PC-9 (cell line): ENCODE measurements at regions of chr1 and their contacts with region 1.

Region 1: DNA sequence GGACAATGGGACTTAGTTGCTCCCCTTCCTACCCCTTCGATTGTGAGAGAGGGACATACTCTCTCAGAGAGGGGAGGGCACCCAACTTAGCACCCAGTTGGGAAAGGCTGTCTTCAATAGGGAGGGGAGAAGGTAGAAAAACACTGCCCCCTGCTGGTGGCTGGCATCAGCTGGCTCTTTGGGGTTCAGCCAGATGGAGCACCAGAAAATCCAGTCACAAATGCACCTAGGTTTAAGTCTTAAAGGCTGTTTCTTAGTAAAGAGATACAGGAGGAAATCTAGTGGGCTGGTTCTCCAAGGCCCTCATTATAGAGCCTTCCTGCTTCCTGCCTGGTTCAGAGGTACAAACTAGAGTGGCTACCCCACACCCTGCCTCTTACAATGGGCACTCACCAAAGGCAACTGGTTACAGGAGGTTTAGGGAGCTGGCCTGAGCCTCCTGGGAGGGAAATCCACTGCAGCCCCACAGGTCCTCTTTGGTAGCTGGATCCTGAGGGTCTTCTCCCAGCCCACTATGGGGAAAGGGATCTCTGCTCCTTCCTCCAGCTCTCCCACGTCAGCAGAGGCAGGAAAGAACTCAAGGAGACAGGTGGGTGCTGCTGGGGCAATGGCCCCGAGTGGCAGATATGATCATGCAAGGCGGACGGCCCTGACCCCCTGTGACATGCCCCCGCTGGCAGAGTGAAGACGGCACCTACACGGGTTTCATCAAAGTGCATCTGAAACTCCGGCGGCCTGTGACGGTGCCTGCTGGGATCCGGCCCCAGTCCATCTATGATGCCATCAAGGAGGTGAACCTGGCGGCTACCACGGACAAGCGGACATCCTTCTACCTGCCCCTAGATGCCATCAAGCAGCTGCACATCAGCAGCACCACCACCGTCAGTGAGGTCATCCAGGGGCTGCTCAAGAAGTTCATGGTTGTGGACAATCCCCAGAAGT is 28.3 kb downstream of the EIF2D start:
- DNase-seq: peak; percentile 42 to 64
- H3K4me3 ChIP-seq: no peak overlapping the region
- H3K27ac ChIP-seq: no peak overlapping the region
- H3K4me1 ChIP-seq: peaks cover 28% of the 10 kb centered on the region
- H3K27me3 ChIP-seq: no peaks in the 10 kb centered on the region
- CTCF ChIP-seq: peak; percentile 95

Region 2: GRCh38 chr1:206476058-206476457 is 107.9 kb before region 1 on chr1:
- CTCF ChIA-PET with region 1: no interaction called
- POLR2A ChIA-PET with region 1: no interaction called
- intact Hi-C with region 1: no loop called
- DNase-seq: no peak
- H3K4me3 ChIP-seq: no peak overlapping the region
- H3K27ac ChIP-seq: no peak overlapping the region
- H3K4me1 ChIP-seq: peaks cover 19% of the 10 kb centered on the region
- H3K27me3 ChIP-seq: no peaks in the 10 kb centered on the region
- CTCF ChIP-seq: no peak

Region 3: DNA sequence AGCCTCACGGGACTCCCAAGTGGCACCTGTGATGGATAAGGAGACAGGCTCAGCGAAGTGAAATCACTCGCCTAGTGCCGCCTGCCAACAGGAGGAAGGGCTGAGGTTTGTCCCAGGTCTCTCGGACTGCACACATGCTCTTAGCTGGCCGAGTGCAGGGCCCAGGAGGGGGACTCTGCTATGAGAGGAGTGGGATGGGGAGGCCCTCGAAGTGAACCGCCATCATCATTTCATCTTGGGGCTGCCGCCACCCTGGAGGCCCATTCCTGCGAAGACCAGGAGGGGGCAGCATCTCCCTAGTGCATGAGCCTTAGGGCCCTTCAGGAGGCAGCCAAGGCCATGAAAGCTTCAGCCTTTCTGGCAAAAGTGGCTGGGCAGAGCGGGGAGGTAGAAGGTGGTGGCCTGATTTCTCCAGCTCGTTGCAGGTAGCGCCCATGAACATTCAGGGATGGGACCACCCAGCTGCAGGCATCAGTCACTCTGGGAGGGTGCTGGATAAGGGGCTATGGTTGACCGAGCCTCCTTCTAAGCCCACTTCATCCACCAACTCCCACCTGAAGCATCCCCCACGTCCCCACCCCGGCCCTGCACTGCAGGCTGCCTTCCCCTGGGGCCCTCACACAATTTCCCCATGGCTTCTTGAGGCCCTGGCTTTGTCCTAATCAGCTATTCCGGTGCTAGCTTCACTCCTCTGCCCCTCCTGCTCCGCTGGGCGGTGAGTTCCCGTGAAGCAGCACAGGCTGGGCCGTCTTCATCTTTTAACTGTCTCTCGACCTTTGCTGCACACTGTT is 93.8 kb before region 1 on chr1:
- CTCF ChIA-PET with region 1: no interaction called
- POLR2A ChIA-PET with region 1: interaction called, 7 read pairs
- intact Hi-C with region 1: loop called (anchors 1 kb)
- DNase-seq: peak; percentile 51 to 71
- H3K4me3 ChIP-seq: no peak overlapping the region
- H3K27ac ChIP-seq: no peak overlapping the region
- H3K4me1 ChIP-seq: no peaks in the 10 kb centered on the region
- H3K27me3 ChIP-seq: no peaks in the 10 kb centered on the region
- CTCF ChIP-seq: peak; percentile 91

Region 4: DNA sequence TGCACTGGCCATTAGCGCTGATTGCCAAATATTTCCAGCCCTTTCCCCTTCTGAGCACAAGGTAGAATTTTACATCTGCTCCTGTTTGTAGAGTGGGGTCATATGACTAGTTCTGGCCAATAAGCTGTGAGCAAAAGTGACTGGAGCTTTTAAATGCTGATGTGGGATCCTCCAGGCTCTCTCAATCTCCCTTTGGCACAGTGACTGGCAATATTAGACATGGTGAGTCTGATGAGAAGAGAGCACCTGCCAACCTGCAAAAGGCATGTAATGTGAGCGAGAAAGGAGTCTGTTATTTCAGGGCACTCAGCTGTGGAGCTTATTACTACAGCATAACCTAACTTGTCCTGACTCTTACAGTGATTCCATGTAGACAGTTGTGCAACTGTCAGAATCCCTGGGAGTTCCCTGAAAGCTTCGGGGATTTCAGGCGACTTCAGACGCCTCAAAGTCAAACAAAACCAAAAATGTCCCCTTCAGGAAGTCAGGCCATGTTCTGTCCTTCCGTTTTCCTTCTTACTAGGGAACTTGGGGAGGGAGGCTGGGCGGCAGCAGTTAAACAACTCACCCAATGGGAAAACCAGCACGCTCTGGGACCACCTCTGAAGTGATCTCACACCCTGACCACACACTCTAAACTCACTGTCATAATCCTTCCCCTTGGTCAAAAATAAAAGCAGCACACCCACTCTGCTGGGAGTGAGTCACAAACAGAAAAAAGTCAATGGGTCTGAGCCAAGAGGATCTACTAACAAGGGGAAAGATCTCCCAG is 80.2 kb before region 1 on chr1:
- CTCF ChIA-PET with region 1: interaction called, 13 read pairs
- POLR2A ChIA-PET with region 1: no interaction called
- intact Hi-C with region 1: loop called (anchors 1 kb)
- DNase-seq: peak; percentile 74 to 97
- H3K4me3 ChIP-seq: peak overlapping the region; percentile 15; the same call in 1 of the 2 replicates
- H3K27ac ChIP-seq: peak overlapping the region; percentile 85
- H3K4me1 ChIP-seq: peaks cover 65% of the 10 kb centered on the region
- H3K27me3 ChIP-seq: no peaks in the 10 kb centered on the region
- CTCF ChIP-seq: no peak

Region 5: DNA sequence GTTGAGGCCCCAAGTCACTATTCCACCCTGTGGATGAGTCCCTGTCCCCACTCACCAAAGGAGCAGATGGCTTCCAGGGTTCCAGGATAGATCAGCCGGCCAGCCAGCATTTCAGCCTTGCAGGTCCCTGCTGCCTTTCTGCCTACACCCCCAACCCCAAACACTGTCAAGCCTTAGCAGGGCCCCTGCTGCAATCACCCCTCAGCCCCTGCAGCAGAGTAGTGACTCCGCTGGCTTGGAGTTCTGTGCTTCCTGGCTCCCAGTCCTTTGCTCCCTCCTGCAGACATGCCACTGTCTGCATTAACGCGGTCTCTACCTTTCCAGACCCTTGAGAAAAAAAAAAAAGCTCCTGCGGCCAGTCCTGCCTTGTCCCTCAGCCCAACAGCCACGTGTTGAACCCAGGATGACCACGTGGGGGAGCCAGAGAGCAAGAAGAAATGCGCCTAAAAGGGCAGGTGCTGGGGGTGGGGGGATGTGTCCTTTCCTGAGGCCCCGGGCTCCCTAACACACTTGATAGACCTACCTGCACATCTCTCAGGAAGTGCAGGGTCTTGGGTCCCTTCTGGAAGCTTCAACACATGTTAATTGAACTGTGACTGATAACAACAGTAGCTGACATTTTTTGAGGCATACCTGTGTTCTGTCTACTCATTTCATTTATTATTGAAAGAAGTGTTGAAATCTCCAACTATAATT is 39.3 kb before region 1 on chr1:
- CTCF ChIA-PET with region 1: interaction called, 3 read pairs
- POLR2A ChIA-PET with region 1: no interaction called
- intact Hi-C with region 1: loop called (anchors 5 kb)
- DNase-seq: peak in 1 of 2 experiments; percentile 73
- H3K4me3 ChIP-seq: no peak overlapping the region
- H3K27ac ChIP-seq: no peak overlapping the region
- H3K4me1 ChIP-seq: no peaks in the 10 kb centered on the region
- H3K27me3 ChIP-seq: no peaks in the 10 kb centered on the region
- CTCF ChIP-seq: peak; percentile 92